OCI-LY7 (cell line): ENCODE measurements at regions of chr20 and their contacts with region 1.

Region 1: GRCh38 chr20:63785691-63786131 is 45.4 kb downstream of the ZBTB46 start:
- DNase-seq: no peak
- H3K4me3 ChIP-seq: no peak overlapping the region
- H3K27ac ChIP-seq: no peak overlapping the region
- H3K4me1 ChIP-seq: peaks cover 32% of the 10 kb centered on the region
- CTCF ChIP-seq: no peak

Region 2: DNA sequence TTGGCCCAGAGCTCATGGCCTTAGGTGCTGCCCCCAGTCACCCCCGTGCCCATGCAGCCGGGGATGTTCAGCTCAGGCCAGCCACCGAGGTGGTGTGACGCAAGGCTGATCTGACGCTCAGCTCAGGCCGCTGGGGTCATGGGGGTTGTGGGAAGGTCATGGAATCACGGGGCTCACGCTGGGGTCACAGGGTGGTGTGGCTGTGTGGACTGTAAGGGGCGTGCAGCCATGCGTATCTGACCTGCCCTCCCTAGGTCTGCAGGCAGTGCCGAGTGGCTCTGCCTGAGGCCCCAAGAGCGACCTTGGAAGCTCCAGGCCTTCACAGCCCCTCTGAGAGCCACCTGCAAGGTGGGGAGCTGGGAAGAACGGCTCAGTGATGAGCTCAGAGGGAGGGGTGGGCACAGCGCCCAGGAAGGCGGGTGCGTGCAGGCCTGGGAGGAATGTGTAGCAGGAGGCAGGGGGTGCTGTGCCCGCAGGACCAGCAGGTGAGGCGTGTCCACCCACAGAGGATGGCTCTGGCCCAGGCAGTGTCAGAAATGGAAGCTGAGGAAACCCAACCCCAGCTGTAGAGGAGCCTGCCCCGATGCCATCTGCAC is 452.4 kb before region 1 on chr20:
- CTCF ChIA-PET with region 1: no interaction called
- POLR2A ChIA-PET with region 1: no interaction called
- intact Hi-C with region 1: no loop called
- DNase-seq: no peak
- H3K4me3 ChIP-seq: no peak overlapping the region
- H3K27ac ChIP-seq: no peak overlapping the region
- H3K4me1 ChIP-seq: no peaks in the 10 kb centered on the region
- CTCF ChIP-seq: no peak

Region 3: DNA sequence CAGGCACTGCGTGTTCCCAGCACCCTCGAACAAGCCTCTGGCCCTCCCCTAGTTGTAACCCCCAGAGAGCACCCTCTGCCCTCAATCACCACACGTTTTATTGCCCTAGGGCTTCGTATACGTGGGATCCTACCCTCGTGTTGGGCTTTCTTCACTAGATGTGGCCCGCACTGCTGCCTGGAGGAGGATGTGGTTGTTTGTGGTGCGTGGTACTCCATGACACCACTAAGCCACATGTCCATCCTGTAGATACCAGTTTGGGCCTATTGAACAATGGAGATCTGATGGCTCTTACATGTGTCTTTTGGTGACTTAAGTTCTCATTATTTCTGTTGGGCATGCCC is 29.1 kb before region 1 on chr20:
- CTCF ChIA-PET with region 1: no interaction called
- POLR2A ChIA-PET with region 1: no interaction called
- intact Hi-C with region 1: no loop called
- DNase-seq: no peak
- H3K4me3 ChIP-seq: no peak overlapping the region
- H3K27ac ChIP-seq: no peak overlapping the region
- H3K4me1 ChIP-seq: no peaks in the 10 kb centered on the region
- CTCF ChIP-seq: no peak

Region 4: GRCh38 chr20:63973636-63974402 is 188.1 kb after region 1 on chr20:
- CTCF ChIA-PET with region 1: no interaction called
- POLR2A ChIA-PET with region 1: no interaction called
- intact Hi-C with region 1: loop called (anchors 2 kb)
- DNase-seq: peak; percentile 81
- H3K4me3 ChIP-seq: no peak overlapping the region
- H3K27ac ChIP-seq: no peak overlapping the region
- H3K4me1 ChIP-seq: peaks cover 32% of the 10 kb centered on the region
- CTCF ChIP-seq: peak; percentile 97